Calu3 (cell line): ENCODE measurements at regions of chr7 and their contacts with region 1.

Region 1: DNA sequence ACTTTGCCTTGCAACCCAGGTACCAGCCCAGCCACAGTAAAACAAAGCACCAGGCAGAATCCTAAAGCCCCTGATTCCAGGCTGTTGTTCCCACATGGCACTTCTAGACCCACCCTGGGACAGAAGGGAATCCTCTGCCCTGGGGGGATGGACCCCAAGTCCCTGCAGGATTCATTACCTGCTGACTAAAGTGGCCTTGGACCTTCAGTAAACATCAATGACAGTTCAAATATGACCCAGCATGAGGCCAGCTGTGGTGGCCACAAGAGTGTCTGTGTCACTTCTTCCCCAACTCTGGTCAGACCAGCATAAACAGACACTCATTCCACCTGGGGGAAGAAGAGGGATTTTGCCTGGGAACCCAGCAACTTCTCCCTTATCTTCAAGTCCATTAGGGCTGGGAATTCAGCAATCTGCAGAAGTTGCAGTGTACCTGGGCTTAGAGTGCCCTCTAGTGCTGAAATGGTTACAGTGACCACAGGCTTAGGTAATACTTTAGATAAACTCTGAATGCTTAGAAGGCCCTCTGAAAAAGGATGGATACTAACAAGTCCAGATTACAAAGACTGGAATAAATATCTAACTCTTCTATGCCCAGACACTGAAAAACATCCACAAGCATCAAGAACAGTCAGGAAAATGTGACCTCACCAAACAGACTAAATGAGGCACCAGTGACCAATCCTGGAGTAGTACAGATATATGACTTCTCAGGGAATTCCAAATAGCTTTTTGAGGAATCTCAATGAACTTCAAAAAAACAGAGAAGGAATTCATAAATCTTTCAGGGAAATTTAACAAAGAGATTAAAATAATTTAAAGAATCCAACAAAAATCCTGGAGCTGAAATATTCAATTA is 108.5 kb upstream of the TMEM168 start:
- DNase-seq: peak; percentile 66
- H3K4me3 Mint-ChIP-seq: no peak overlapping the region
- H3K27ac Mint-ChIP-seq: no peak overlapping the region
- H3K4me1 Mint-ChIP-seq: no peaks in the 10 kb centered on the region
- H3K27me3 Mint-ChIP-seq: no peaks in the 10 kb centered on the region
- CTCF ChIP-seq: peak; percentile 70

Region 2: GRCh38 chr7:112571852-112572607 is 326.6 kb before region 1 on chr7:
- CTCF ChIA-PET with region 1: no interaction called
- intact Hi-C with region 1: loop called (anchors 5 kb)
- DNase-seq: no peak
- H3K4me3 Mint-ChIP-seq: no peak overlapping the region
- H3K27ac Mint-ChIP-seq: peak overlapping the region; percentile 78
- H3K4me1 Mint-ChIP-seq: peaks cover 31% of the 10 kb centered on the region
- H3K27me3 Mint-ChIP-seq: no peaks in the 10 kb centered on the region
- CTCF ChIP-seq: no peak

Region 3: GRCh38 chr7:112743811-112744210 is 154.8 kb before region 1 on chr7:
- CTCF ChIA-PET with region 1: no interaction called
- intact Hi-C with region 1: no loop called
- DNase-seq: no peak
- H3K4me3 Mint-ChIP-seq: no peak overlapping the region
- H3K27ac Mint-ChIP-seq: no peak overlapping the region
- H3K4me1 Mint-ChIP-seq: no peaks in the 10 kb centered on the region
- H3K27me3 Mint-ChIP-seq: no peaks in the 10 kb centered on the region
- CTCF ChIP-seq: no peak

Region 4: GRCh38 chr7:112819536-112819935 is 79.1 kb before region 1 on chr7:
- CTCF ChIA-PET with region 1: no interaction called
- intact Hi-C with region 1: no loop called
- DNase-seq: no peak
- H3K4me3 Mint-ChIP-seq: no peak overlapping the region
- H3K27ac Mint-ChIP-seq: no peak overlapping the region
- H3K4me1 Mint-ChIP-seq: no peaks in the 10 kb centered on the region
- H3K27me3 Mint-ChIP-seq: no peaks in the 10 kb centered on the region
- CTCF ChIP-seq: no peak